AG04450 (cell line): ENCODE measurements at regions of chr5 and their contacts with region 1.

Region 1: GRCh38 chr5:7927466-7928375 is 58.8 kb downstream of the MTRR start:
- DNase-seq: peak; percentile 8
- H3K4me3 ChIP-seq: no peak overlapping the region
- H3K27ac ChIP-seq: no peak overlapping the region
- H3K27me3 ChIP-seq: peaks cover 5% of the 10 kb centered on the region
- CTCF ChIP-seq: peak; percentile 82

Region 2: DNA sequence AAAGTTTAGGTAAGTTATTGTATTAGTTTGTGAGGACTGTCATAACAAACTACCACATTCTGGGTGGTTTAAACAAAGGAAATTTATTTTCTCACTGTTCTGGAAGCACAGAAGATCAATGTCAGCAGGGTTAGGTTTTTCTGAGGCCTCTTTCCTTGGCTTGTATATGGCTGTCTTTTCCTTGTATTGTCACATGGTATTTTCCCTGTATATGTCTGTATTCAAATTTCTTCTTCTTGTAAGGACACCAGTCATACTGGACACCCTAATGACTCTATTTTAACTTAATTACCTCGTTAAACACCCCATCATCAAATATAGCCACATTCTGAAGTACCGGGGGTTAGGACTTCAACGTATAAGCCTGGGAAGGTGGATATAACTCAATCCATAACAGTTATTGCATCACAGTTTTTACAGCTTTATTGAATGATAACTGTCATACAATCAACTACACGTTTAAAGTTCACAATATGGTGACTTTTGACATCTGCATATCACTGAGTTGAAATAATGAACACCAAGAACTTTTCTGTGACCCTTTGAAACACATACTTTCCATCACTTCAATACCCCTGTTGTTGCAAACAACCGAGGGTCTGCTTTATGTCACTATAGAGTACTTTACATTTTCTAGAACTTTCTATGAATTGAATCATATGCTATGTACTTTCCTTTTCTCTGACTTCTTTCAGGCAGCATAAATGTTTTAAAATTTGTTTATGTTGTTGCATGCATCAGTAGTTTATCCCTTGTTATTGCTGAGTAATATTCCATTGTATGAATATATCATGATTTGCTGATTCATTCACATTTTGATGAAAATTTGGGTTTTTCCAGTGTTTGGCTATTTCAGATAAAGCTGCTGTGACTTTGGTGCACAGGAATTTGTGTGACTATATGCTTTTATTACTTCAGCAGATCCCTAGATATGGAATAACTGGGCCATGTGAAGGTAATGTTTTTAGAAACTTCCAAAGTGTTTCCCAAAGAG is 10.3 kb before region 1 on chr5:
- CTCF ChIA-PET with region 1: interaction called, 10 read pairs
- POLR2A ChIA-PET with region 1: no interaction called
- DNase-seq: no peak
- H3K4me3 ChIP-seq: no peak overlapping the region
- H3K27ac ChIP-seq: no peak overlapping the region
- H3K27me3 ChIP-seq: no peaks in the 10 kb centered on the region
- CTCF ChIP-seq: no peak

Region 3: DNA sequence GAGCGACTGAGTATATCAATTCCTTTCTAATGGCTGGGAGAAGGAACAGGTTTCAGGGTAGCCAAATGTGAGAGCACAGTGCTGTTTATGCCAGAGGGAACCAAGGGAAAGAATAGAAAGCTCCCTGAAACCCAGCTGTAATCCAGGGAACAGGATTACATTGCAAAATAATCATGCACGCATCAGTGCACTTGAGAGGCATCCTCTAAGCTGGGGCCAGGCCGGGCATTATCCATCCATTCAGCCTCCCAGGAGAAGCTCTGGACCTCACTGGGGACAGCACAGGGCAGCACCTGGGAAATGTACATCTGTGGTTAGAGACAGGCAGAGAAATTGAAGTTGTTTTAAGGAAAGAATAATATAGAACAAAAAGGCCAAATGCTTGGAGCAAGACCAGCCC is 14.0 kb after region 1 on chr5:
- CTCF ChIA-PET with region 1: interaction called, 12 read pairs
- POLR2A ChIA-PET with region 1: no interaction called
- DNase-seq: no peak
- H3K4me3 ChIP-seq: no peak overlapping the region
- H3K27ac ChIP-seq: no peak overlapping the region
- H3K27me3 ChIP-seq: no peaks in the 10 kb centered on the region
- CTCF ChIP-seq: no peak